HepG2 (cell line): ENCODE measurements at regions of chr10 and their contacts with region 1.

Region 1: GRCh38 chr10:21953585-21954057 is 49.9 kb downstream of the DNAJC1 start:
- DNase-seq: peak; percentile 36
- ATAC-seq: no peak; the same call in 2 of the 3 replicates
- H3K4me3 ChIP-seq: no peak overlapping the region
- H3K27ac ChIP-seq: no peak overlapping the region
- H3K4me1 ChIP-seq: no peaks in the 10 kb centered on the region
- H3K27me3 ChIP-seq: no peaks in the 10 kb centered on the region
- CTCF ChIP-seq: peak; percentile 35; the same call in 1 of the 2 replicates
- EP300 ChIP-seq: no peak
- POLR2A ChIP-seq: no peak
- RAD21 ChIP-seq: no peak

Region 2: GRCh38 chr10:21278491-21279239 is 675.0 kb before region 1 on chr10:
- CTCF ChIA-PET with region 1: no interaction called
- POLR2A ChIA-PET with region 1: no interaction called
- in situ Hi-C with region 1: no loop called
- intact Hi-C with region 1: loop called (anchors 1 kb)
- DNase-seq: peak; percentile 87
- ATAC-seq: peak; percentile 99
- H3K4me3 ChIP-seq: no peak overlapping the region
- H3K27ac ChIP-seq: no peak overlapping the region
- H3K4me1 ChIP-seq: no peaks in the 10 kb centered on the region
- H3K27me3 ChIP-seq: no peaks in the 10 kb centered on the region; a peak in 1 of 5 replicates
- CTCF ChIP-seq: peak; percentile 95
- EP300 ChIP-seq: no peak
- POLR2A ChIP-seq: no peak
- RAD21 ChIP-seq: peak; percentile 92

Region 3: GRCh38 chr10:21732067-21732772 is 221.4 kb before region 1 on chr10:
- CTCF ChIA-PET with region 1: no interaction called
- POLR2A ChIA-PET with region 1: no interaction called
- in situ Hi-C with region 1: no loop called
- intact Hi-C with region 1: loop called (anchors 5 kb)
- DNase-seq: peak; percentile 50
- ATAC-seq: peak; percentile 94
- H3K4me3 ChIP-seq: no peak overlapping the region
- H3K27ac ChIP-seq: no peak overlapping the region
- H3K4me1 ChIP-seq: peaks cover 23% of the 10 kb centered on the region
- H3K27me3 ChIP-seq: no peaks in the 10 kb centered on the region
- CTCF ChIP-seq: peak; percentile 86
- EP300 ChIP-seq: no peak
- POLR2A ChIP-seq: no peak
- RAD21 ChIP-seq: peak; percentile 85

Region 4: GRCh38 chr10:21894648-21895342 is 58.8 kb before region 1 on chr10:
- CTCF ChIA-PET with region 1: no interaction called
- POLR2A ChIA-PET with region 1: no interaction called
- in situ Hi-C with region 1: no loop called
- intact Hi-C with region 1: no loop called
- DNase-seq: no peak
- ATAC-seq: no peak
- H3K4me3 ChIP-seq: no peak overlapping the region
- H3K27ac ChIP-seq: no peak overlapping the region
- H3K4me1 ChIP-seq: no peaks in the 10 kb centered on the region
- H3K27me3 ChIP-seq: no peaks in the 10 kb centered on the region
- CTCF ChIP-seq: no peak
- EP300 ChIP-seq: no peak
- POLR2A ChIP-seq: no peak
- RAD21 ChIP-seq: no peak

Region 5: GRCh38 chr10:21978191-21978862 is 24.7 kb after region 1 on chr10:
- CTCF ChIA-PET with region 1: no interaction called
- POLR2A ChIA-PET with region 1: no interaction called
- in situ Hi-C with region 1: no loop called
- intact Hi-C with region 1: no loop called
- DNase-seq: no peak
- ATAC-seq: no peak
- H3K4me3 ChIP-seq: no peak overlapping the region
- H3K27ac ChIP-seq: no peak overlapping the region
- H3K4me1 ChIP-seq: peaks cover 6% of the 10 kb centered on the region; the same call in 1 of the 2 replicates
- H3K27me3 ChIP-seq: no peaks in the 10 kb centered on the region; a peak in 1 of 5 replicates
- CTCF ChIP-seq: no peak
- EP300 ChIP-seq: no peak
- POLR2A ChIP-seq: no peak
- RAD21 ChIP-seq: no peak

Region 6: DNA sequence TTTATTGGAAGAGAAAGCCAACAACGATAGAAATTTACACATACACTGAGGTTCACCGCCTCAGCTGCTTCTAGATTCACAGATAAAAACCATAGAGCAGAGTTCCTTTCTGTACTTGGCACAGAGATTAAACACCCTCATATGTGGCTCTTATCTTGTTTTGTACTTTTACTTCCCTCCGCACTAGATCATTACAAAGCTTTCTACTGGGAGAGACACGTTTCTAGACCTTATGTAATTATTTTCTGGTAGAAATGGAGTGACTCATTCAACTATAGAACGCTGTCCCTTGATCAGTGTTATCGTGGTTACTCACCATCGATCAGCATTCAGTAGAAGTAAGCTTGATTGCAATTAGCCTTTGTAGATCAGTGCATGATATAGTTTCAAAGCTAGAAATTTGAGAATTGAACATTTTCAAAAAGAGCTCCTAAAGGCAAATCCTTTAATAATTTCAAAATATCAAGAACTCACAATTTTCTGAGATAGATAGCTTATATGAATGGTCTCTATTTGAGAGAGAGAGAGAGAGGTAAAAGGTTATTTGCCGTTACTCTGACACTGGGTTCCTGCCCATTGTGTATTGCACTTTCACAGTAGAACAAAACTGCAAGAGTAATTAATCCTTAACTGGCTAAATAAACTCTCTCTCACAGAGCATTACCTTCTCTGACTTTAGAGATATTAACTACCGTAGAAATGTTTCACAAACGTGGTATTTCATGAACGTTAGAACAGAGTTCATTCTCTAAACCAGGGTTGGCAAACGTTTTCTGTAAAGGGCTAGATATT is 76.0 kb after region 1 on chr10:
- CTCF ChIA-PET with region 1: no interaction called
- POLR2A ChIA-PET with region 1: no interaction called
- in situ Hi-C with region 1: no loop called
- intact Hi-C with region 1: no loop called
- DNase-seq: no peak
- ATAC-seq: no peak; the same call in 2 of the 3 replicates
- H3K4me3 ChIP-seq: no peak overlapping the region
- H3K27ac ChIP-seq: no peak overlapping the region
- H3K4me1 ChIP-seq: no peaks in the 10 kb centered on the region
- H3K27me3 ChIP-seq: no peaks in the 10 kb centered on the region
- CTCF ChIP-seq: no peak
- EP300 ChIP-seq: no peak
- POLR2A ChIP-seq: no peak
- RAD21 ChIP-seq: no peak

Region 7: GRCh38 chr10:22148961-22149360 is 195.3 kb after region 1 on chr10:
- CTCF ChIA-PET with region 1: no interaction called
- POLR2A ChIA-PET with region 1: no interaction called
- in situ Hi-C with region 1: no loop called
- intact Hi-C with region 1: no loop called
- DNase-seq: no peak
- ATAC-seq: no peak
- H3K4me3 ChIP-seq: no peak overlapping the region
- H3K27ac ChIP-seq: no peak overlapping the region
- H3K4me1 ChIP-seq: no peaks in the 10 kb centered on the region
- H3K27me3 ChIP-seq: no peaks in the 10 kb centered on the region; a peak in 2 of 5 replicates
- CTCF ChIP-seq: no peak
- EP300 ChIP-seq: no peak
- POLR2A ChIP-seq: no peak
- RAD21 ChIP-seq: no peak